GM12878 (cell line): ENCODE measurements at regions of chr9 and their contacts with region 1.

Region 1: DNA sequence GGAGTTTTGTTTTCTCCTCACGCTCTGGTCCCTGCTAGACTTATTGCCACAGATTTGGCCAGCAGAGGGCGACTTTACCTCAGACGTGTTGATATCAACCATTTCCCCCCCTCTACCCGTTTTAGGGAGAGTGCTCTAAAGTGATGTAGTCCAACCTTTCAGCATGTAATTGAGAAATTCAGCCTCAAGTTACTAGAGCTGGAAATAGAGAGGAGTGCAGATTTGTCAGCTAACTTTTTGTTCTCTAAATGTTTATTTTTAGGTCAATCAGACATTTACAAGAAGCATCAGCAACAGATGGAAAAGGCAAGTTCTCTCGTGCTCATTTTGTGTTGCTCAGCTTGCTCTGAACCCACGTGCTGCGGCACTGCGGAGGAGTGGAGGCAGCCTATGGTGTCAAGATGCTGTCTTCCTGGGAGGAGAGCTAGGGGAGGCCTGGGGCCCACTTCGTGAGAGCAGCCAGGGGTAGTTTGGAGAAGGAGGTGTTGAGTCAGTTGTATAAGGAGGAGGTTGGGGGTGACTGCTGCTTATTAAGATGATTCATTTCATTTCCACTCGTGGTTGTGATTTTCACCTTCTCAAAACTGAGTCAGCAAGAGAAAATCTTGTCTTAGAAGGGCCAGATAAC is 53.6 kb downstream of the GPR107 start:
- DNase-seq: no peak
- ATAC-seq: peak; percentile 98
- H3K4me3 ChIP-seq: no peak overlapping the region
- H3K27ac ChIP-seq: no peak overlapping the region
- H3K4me1 ChIP-seq: peaks cover 6% of the 10 kb centered on the region
- H3K27me3 ChIP-seq: no peaks in the 10 kb centered on the region
- CTCF ChIP-seq: peak; percentile 72 to 88 (median 86)
- EP300 ChIP-seq: no peak
- POLR2A ChIP-seq: no peak
- RAD21 ChIP-seq: peak; percentile 90

Region 2: DNA sequence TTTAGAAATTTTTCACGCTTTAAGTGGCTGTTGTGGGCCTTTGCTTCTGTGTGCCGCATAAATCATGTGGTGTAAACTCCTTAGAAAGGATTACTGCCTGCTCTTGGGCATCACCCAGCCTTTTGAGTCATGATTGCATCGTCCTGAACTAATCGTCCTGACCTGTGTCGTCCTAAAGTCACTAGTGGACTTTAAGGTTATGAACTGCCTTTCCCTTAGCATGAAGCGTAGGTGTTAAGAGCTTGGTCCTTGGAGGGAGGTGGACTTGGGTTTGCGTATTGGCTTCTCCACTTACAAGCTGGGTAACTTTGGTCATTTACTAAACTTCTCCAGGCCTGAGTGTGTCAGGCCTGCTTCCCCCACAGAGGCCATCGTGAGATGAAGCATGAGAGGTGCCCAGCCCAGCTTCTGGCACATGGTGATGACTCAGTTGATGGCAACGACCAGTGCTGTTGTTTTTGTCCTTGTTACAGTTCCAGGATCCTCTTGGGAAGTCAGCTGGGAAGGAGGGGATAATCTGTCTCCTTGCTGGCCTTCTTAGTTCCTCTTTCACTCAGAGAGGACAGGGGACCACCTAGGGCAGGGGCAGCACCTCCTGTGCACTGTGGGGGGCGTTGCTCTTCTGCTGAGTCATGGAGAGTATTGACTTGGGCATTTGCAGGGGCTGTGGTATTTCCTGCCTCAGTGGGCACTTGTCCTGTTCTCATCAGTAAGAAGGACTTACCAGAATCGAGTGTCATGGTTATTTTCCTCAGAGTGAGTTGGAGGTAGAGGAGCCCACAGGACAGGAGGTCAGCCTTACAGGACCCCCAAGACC is 10.7 kb after region 1 on chr9:
- CTCF ChIA-PET with region 1: interaction called, 14 read pairs
- POLR2A ChIA-PET with region 1: no interaction called
- RAD21 ChIA-PET with region 1: interaction called, 4 read pairs
- SMC1A ChIA-PET with region 1: interaction called, 6 read pairs
- in situ Hi-C with region 1: no loop called
- intact Hi-C with region 1: no loop called
- DNase-seq: no peak
- ATAC-seq: no peak
- H3K4me3 ChIP-seq: no peak overlapping the region
- H3K27ac ChIP-seq: no peak overlapping the region
- H3K4me1 ChIP-seq: peaks cover 8% of the 10 kb centered on the region
- H3K27me3 ChIP-seq: no peaks in the 10 kb centered on the region
- CTCF ChIP-seq: no peak
- EP300 ChIP-seq: no peak
- POLR2A ChIP-seq: no peak
- RAD21 ChIP-seq: no peak

Region 3: GRCh38 chr9:130128733-130129431 is 21.5 kb after region 1 on chr9:
- CTCF ChIA-PET with region 1: interaction called, 12 read pairs
- POLR2A ChIA-PET with region 1: no interaction called
- RAD21 ChIA-PET with region 1: interaction called, 22 read pairs
- SMC1A ChIA-PET with region 1: interaction called, 11 read pairs
- in situ Hi-C with region 1: no loop called
- intact Hi-C with region 1: no loop called
- DNase-seq: peak; percentile 79
- ATAC-seq: peak; percentile 94
- H3K4me3 ChIP-seq: peak overlapping the region; percentile 4; the same call in 1 of the 2 replicates
- H3K27ac ChIP-seq: peak overlapping the region; percentile 94
- H3K4me1 ChIP-seq: peaks cover 21% of the 10 kb centered on the region
- H3K27me3 ChIP-seq: no peaks in the 10 kb centered on the region
- CTCF ChIP-seq: no peak
- EP300 ChIP-seq: peak; percentile 96 to 98; a peak in 3 of 4 replicates
- POLR2A ChIP-seq: peak; percentile 64; the same call in 1 of the 2 replicates
- RAD21 ChIP-seq: 0 out of 2 replicates have a peak, but pooled peaks have one; percentile 6

Region 4: GRCh38 chr9:130230631-130231030 is 123.3 kb after region 1 on chr9:
- CTCF ChIA-PET with region 1: interaction called, 96 read pairs
- POLR2A ChIA-PET with region 1: interaction called, 11 read pairs
- RAD21 ChIA-PET with region 1: interaction called, 20 read pairs
- SMC1A ChIA-PET with region 1: interaction called, 46 read pairs
- in situ Hi-C with region 1: loop called (anchors 5 kb)
- intact Hi-C with region 1: no loop called
- DNase-seq: no peak
- ATAC-seq: no peak
- H3K4me3 ChIP-seq: no peak overlapping the region
- H3K27ac ChIP-seq: no peak overlapping the region
- H3K4me1 ChIP-seq: no peaks in the 10 kb centered on the region
- H3K27me3 ChIP-seq: no peaks in the 10 kb centered on the region
- CTCF ChIP-seq: no peak
- EP300 ChIP-seq: no peak
- POLR2A ChIP-seq: no peak
- RAD21 ChIP-seq: no peak

Region 5: GRCh38 chr9:130235897-130236668 is 128.7 kb after region 1 on chr9:
- CTCF ChIA-PET with region 1: interaction called, 96 read pairs
- POLR2A ChIA-PET with region 1: interaction called, 11 read pairs
- RAD21 ChIA-PET with region 1: interaction called, 20 read pairs
- SMC1A ChIA-PET with region 1: interaction called, 46 read pairs
- in situ Hi-C with region 1: loop called (anchors 5 kb)
- intact Hi-C with region 1: loop called (anchors 1 kb)
- DNase-seq: no peak
- ATAC-seq: peak; percentile 25
- H3K4me3 ChIP-seq: no peak overlapping the region
- H3K27ac ChIP-seq: no peak overlapping the region
- H3K4me1 ChIP-seq: peaks cover 15% of the 10 kb centered on the region
- H3K27me3 ChIP-seq: no peaks in the 10 kb centered on the region
- CTCF ChIP-seq: peak; percentile 92 to 99 (median 92)
- EP300 ChIP-seq: no peak
- POLR2A ChIP-seq: no peak
- RAD21 ChIP-seq: peak; percentile 81

Region 6: GRCh38 chr9:130243015-130243734 is 135.8 kb after region 1 on chr9:
- CTCF ChIA-PET with region 1: interaction called, 96 read pairs
- POLR2A ChIA-PET with region 1: no interaction called
- RAD21 ChIA-PET with region 1: interaction called, 20 read pairs
- SMC1A ChIA-PET with region 1: interaction called, 46 read pairs
- in situ Hi-C with region 1: loop called (anchors 5 kb)
- intact Hi-C with region 1: no loop called
- DNase-seq: peak; percentile 31
- ATAC-seq: peak; percentile 82
- H3K4me3 ChIP-seq: no peak overlapping the region
- H3K27ac ChIP-seq: no peak overlapping the region
- H3K4me1 ChIP-seq: peaks cover 19% of the 10 kb centered on the region
- H3K27me3 ChIP-seq: no peaks in the 10 kb centered on the region
- CTCF ChIP-seq: peak; percentile 79 to 92 (median 79)
- EP300 ChIP-seq: no peak
- POLR2A ChIP-seq: no peak
- RAD21 ChIP-seq: peak; percentile 47

Region 7: DNA sequence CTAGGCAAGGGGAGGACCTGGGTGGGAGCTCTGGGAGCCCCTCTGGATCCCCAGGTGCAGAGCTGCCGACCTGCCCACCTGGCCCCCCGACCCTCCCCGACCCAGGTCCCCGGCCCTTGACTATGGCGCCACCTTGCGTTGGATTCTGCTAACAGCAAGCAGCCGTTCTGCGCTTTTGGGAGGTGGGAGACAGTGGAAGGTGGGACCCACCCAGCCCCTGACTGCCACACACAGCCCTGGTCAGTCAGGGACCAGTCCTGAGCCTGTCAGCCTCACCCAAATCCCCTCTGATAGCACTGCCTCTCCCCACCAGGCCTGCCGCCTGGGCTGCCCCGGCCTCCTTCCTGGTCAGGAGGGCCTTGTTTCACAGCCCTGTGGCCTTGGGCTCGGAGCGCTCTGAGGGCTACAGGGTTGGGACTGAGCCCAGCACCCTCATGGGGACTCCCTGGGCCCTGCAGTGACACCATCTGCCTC is 236.1 kb after region 1 on chr9:
- CTCF ChIA-PET with region 1: interaction called, 4 read pairs
- POLR2A ChIA-PET with region 1: no interaction called
- RAD21 ChIA-PET with region 1: no interaction called
- SMC1A ChIA-PET with region 1: no interaction called
- in situ Hi-C with region 1: no loop called
- intact Hi-C with region 1: loop called (anchors 5 kb)
- DNase-seq: no peak
- ATAC-seq: peak; percentile 44; the same call in 2 of the 3 replicates
- H3K4me3 ChIP-seq: no peak overlapping the region
- H3K27ac ChIP-seq: no peak overlapping the region
- H3K4me1 ChIP-seq: no peaks in the 10 kb centered on the region
- H3K27me3 ChIP-seq: no peaks in the 10 kb centered on the region
- CTCF ChIP-seq: peak; percentile 57 to 78 (median 61)
- EP300 ChIP-seq: no peak
- POLR2A ChIP-seq: no peak
- RAD21 ChIP-seq: peak; percentile 64